Mucosa of descending colon (tissue), 3 donors: ENCODE measurements at regions of chr6 and their contacts with region 1.

Region 1: DNA sequence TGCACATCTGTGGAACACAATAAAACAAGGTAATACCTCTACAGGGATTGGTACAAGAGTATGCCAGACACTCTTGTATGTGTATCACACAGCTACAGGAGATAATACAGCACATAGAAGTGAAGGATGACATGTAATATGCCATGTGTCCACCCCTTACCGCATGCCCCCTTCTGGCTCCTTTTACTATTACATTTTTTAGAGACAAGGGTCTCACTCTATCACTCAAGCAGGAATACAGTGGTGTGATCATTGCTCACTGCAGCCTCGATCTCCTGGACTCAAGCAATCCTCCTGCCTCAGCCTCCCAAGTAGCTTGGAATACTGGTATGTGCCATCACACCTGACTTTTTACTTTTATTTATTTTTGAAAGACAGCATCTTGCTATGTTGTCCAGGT is 4.2 kb upstream of the NCR3 start:
- DNase-seq: no peak
- ATAC-seq: peak; percentile 52
- H3K4me3 ChIP-seq: no peak overlapping the region
- H3K4me1 ChIP-seq: no peaks in the 10 kb centered on the region
- CTCF ChIP-seq: no peak

Region 2: DNA sequence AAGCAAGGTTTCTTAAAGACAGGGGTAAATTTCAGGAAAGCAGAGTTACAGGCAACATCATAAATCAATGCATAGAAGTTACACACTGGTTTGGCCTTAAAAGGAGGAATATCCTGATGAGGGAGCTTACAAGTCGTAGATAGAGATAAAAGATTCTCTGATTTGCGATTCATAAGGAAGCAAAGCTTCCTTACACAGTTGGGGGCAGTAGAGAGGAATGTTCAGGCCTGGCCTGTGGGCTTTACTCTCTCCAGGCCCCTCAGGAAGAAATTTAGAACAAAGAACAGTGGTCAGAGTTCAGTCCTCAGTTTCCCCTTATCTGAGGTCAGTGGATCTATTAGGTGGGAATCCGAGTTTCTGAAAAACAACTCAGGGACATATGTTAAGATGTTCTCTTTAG is 344.4 kb before region 1 on chr6:
- intact Hi-C with region 1: no loop called
- DNase-seq: no peak
- ATAC-seq: no peak
- H3K4me3 ChIP-seq: no peak overlapping the region
- H3K4me1 ChIP-seq: no peaks in the 10 kb centered on the region
- CTCF ChIP-seq: no peak

Region 3: GRCh38 chr6:31493875-31494694 is 102.9 kb before region 1 on chr6:
- intact Hi-C with region 1: loop called in 1 of 2 experiments (anchors 10 kb)
- DNase-seq: peak; percentile 86 to 95 (median 90)
- ATAC-seq: peak; percentile 74
- H3K4me3 ChIP-seq: peak overlapping the region; percentile 12
- H3K4me1 ChIP-seq: peaks cover 12% of the 10 kb centered on the region
- CTCF ChIP-seq: peak; percentile 87

Region 4: DNA sequence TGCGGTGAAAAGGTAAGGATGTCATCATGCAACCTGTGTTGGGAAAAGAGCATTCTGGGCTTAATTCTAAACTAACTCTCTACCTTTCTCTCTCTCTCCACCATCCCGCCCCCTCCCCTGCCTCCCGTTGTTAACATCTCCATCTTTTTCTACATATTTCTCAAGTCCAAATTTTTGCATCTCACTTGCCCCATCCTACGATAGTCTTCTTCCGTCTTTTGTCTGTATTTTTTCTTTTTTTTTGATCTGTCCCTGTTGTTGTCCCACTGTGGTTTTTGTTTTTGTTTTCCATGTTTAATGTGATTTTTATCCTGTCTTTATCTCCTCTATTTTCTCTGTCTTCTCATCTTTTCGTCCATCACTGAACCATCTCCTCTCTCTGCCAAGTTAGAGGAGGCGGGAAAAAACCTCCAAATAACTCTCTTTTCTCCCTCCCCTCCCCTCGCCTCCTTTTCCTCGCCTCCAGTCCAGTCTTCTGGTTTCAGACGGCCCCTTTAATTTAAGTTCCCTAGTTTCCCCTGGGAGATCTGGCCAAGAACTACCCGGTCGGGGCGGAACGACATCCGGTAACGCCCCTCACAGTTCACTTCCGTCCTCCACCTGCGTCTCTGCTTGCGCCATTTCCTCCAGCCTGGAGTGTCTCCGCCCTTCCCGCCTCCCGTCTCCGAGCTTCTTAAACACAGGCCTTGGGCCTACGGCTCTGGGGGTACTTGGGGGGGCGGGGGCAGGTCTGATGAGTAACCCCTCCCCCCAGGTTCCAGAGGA is 49.9 kb before region 1 on chr6 and contains the start of gene NFKBIL1:
- intact Hi-C with region 1: loop called (anchors 5 kb)
- DNase-seq: peak; percentile 93 to 96 (median 96)
- ATAC-seq: peak; percentile 96
- H3K4me3 ChIP-seq: peak within 1 kb of the TSS; percentile 6
- H3K4me1 ChIP-seq: peaks cover 15% of the 10 kb centered on the region
- CTCF ChIP-seq: no peak
- total RNA-seq, gene NFKBIL1: 15.8 to 27.8 (median 18.3) TPM